A549 (cell line): ENCODE measurements at regions of chr15 and their contacts with region 1.

Region 1: GRCh38 chr15:34621675-34622074 is 38.2 kb upstream of the GOLGA8B start:
- DNase-seq: peak; percentile 7 to 42
- ATAC-seq: peak; percentile 48 to 76; a peak in 4 of 6 replicates
- H3K4me3 ChIP-seq: no peak overlapping the region
- H3K27ac ChIP-seq: no peak overlapping the region
- H3K4me1 ChIP-seq: no peaks in the 10 kb centered on the region
- CTCF ChIP-seq: peak; percentile 68
- EP300 ChIP-seq: no peak
- POLR2A ChIP-seq: no peak
- RAD21 ChIP-seq: peak; percentile 79

Region 2: DNA sequence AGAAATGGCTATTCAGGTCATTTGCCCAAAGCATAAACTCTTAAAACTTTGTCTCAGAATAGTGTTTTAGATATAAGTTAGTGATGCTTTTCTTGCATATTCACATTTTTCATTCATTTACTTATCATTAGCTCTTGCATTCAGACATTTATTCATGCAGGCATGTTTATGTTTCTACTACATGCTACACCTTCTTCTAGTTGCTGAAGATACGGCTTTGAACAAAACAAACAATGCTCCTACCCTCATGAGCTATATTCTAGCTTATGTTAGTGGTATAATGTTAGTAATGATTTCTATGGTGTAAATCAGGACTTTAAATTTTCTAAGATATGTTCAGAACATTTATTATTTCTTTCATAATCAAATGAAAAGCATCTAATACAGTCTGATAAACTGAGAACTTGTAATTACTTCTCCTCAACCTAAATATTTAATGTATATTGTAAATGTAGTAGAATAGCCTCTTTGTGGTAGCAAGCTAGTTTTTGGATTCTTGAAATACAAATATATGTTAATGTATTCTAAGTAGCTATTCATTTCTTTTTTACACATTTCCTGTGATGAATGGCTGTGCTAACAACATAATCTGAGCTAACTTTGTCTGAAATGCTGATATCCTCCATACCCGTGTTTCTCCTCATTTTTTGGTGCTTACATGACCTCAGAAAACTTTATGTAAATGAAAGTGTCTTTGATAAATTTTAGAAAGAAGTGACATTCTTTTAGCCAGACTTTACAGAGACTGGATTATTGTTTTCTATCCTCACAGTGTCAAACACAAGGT is 22.7 kb before region 1 on chr15:
- CTCF ChIA-PET with region 1: no interaction called
- POLR2A ChIA-PET with region 1: no interaction called
- DNase-seq: no peak
- ATAC-seq: no peak
- H3K4me3 ChIP-seq: no peak overlapping the region
- H3K27ac ChIP-seq: no peak overlapping the region
- H3K4me1 ChIP-seq: no peaks in the 10 kb centered on the region
- CTCF ChIP-seq: no peak
- EP300 ChIP-seq: no peak
- POLR2A ChIP-seq: no peak
- RAD21 ChIP-seq: no peak

Region 3: GRCh38 chr15:34610354-34610753 is 11.3 kb before region 1 on chr15:
- CTCF ChIA-PET with region 1: interaction called, 13 read pairs
- POLR2A ChIA-PET with region 1: no interaction called
- DNase-seq: peak; percentile 15 to 44
- ATAC-seq: peak; percentile 82 to 85; a peak in 5 of 6 replicates
- H3K4me3 ChIP-seq: no peak overlapping the region
- H3K27ac ChIP-seq: no peak overlapping the region
- H3K4me1 ChIP-seq: no peaks in the 10 kb centered on the region
- CTCF ChIP-seq: no peak; the same call in 1 of the 3 replicates
- EP300 ChIP-seq: no peak
- POLR2A ChIP-seq: no peak
- RAD21 ChIP-seq: peak; percentile 37 to 51; a peak in 4 of 5 replicates

Region 4: DNA sequence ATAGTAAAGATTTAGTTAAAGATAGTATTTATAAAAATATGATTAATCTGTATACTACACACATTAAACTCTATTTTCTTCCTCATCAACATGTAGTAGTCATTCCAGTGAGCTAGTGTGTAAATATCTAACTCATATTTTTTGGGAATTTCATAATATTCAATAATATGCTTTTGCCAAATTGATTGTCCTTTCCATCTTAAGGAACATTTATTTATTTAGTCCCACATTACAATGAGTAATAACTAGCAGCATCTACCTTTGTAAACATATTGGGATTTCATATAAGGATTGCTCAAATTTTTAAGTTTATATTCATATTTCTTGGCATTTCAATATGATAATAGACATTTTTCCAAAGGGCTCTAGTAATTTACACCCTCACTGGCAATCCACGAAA is 15.6 kb after region 1 on chr15:
- CTCF ChIA-PET with region 1: interaction called, 10 read pairs
- POLR2A ChIA-PET with region 1: no interaction called
- DNase-seq: no peak
- ATAC-seq: no peak
- H3K4me3 ChIP-seq: no peak overlapping the region
- H3K27ac ChIP-seq: no peak overlapping the region
- H3K4me1 ChIP-seq: no peaks in the 10 kb centered on the region
- CTCF ChIP-seq: no peak
- EP300 ChIP-seq: no peak
- POLR2A ChIP-seq: no peak
- RAD21 ChIP-seq: no peak